ENCODE measurements at regions of chr5 and their contacts with region 1.

Region 1: DNA sequence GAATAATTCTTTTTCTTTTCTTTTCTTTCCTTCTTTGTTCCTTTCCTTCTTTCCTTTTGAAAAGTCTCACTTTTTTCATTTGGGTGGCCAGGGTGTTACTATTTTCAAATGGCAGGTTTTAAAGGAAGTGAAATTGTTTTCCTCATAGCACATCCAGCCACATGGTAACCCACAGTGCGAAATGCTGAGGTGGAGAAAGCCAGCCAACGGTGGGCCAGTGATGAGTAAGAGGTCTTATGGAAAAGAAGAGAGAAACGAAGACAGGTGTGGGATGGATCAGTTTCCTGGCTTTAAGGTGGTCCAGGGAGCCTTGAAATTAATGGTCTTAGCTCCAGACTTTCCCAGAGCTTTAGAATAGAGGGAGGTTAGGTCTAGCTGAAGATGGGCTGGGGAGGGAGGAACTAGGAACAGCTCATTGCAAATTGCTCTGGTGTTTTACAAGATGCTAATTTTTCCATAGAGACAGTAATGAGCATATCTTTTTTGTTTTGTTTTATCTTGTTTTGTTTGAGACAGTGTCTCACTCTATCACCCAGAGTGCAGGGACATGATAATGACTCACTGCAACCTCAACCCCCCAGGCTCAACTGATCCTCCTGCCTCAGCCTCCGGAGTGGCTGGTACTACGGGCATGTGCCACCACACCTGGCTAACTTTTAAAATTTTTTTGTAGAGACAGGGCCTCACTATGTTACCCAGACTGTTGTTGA is 17.8 kb downstream of the ITK start:
- DNase-seq: peak; percentile 77
- H3K4me3 Mint-ChIP-seq: peak overlapping the region; percentile 53
- H3K27ac Mint-ChIP-seq: peak overlapping the region; percentile 95
- H3K4me1 Mint-ChIP-seq: peaks cover 94% of the 10 kb centered on the region
- H3K27me3 Mint-ChIP-seq: no peaks in the 10 kb centered on the region

Region 2: DNA sequence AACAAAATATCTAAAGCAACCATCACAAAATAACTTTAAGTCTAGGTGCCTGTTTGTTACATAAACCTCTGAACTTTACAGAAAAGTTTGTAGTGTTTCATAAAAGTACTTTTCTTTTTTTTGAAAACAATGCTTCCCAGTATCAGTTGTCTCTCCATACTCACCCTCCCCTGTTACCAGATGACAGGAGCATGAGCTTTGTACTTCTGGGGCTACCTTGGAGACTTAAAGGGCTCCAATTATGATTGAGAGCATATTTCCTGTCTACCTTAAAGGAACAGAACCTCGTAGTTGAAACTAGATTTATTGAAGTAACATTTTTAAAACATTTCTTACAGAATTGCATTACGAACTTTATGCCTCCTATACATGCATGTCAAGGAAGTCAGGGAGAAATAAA is 403.7 kb before region 1 on chr5:
- CTCF ChIA-PET with region 1: no interaction called
- POLR2A ChIA-PET with region 1: no interaction called
- intact Hi-C with region 1: no loop called
- DNase-seq: no peak
- H3K4me3 Mint-ChIP-seq: no peak overlapping the region
- H3K27ac Mint-ChIP-seq: no peak overlapping the region
- H3K4me1 Mint-ChIP-seq: no peaks in the 10 kb centered on the region
- H3K27me3 Mint-ChIP-seq: peaks cover 3% of the 10 kb centered on the region

Region 3: GRCh38 chr5:157172403-157172802 is 26.0 kb before region 1 on chr5:
- CTCF ChIA-PET with region 1: interaction called, 4 read pairs
- POLR2A ChIA-PET with region 1: interaction called, 4 read pairs
- intact Hi-C with region 1: loop called (anchors 1 kb)
- DNase-seq: peak; percentile 96
- H3K4me3 Mint-ChIP-seq: peak overlapping the region; percentile 68
- H3K27ac Mint-ChIP-seq: peak overlapping the region; percentile 95
- H3K4me1 Mint-ChIP-seq: peaks cover 83% of the 10 kb centered on the region
- H3K27me3 Mint-ChIP-seq: no peaks in the 10 kb centered on the region

Region 4: DNA sequence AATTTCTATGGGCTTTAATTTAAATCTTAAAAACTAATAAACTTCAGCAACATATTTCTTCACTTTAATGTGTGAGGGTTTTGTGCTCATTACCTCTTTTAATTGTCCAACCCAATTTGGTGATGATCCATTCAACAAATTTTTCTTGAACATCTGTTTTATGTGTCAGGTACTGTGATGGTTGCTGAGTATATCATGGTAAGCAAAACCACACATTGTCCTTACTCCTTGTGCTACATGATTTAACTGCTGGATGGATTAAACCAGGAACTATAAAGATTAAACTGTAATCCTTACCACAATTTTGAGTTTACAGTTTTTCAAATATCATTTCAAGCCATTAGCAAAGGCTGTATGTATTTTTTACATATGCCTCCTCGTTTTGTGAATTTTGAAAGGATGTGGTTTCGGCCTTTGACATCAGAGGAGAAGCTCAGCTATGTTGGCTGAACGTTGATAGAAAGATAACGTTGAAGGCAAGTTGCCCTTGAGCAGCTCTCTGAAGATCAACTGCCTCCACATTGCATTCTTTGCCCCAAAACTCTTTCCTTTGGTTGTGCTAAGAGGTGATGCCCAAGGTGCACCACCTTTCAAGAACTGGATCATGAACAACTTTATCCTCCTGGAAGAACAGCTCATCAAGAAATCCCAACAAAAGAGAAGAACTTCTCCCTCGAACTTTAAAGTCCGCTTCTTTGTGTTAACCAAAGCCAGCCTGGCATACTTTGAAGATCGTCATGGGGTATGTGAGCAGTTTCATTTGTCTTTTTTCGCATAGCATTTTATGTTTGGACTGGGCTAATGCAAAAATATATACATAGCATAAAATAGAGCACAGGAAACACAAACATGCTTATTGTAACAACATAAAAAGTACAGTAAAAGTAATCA is 17.8 kb before region 1 on chr5 and contains the start of gene ITK:
- CTCF ChIA-PET with region 1: interaction called, 3 read pairs
- POLR2A ChIA-PET with region 1: interaction called, 178 read pairs
- intact Hi-C with region 1: loop called (anchors 1 kb)
- DNase-seq: peak; percentile 58
- H3K4me3 Mint-ChIP-seq: peak within 1 kb of the TSS; percentile 99
- H3K27ac Mint-ChIP-seq: peak within 1 kb of the TSS; percentile 100
- H3K4me1 Mint-ChIP-seq: peaks cover 45% of the 10 kb centered on the region
- H3K27me3 Mint-ChIP-seq: no peaks in the 10 kb centered on the region
- total RNA-seq, gene ITK: 236 to 240 TPM